ENCODE measurements at regions of chr3 and their contacts with region 1.

Region 1: DNA sequence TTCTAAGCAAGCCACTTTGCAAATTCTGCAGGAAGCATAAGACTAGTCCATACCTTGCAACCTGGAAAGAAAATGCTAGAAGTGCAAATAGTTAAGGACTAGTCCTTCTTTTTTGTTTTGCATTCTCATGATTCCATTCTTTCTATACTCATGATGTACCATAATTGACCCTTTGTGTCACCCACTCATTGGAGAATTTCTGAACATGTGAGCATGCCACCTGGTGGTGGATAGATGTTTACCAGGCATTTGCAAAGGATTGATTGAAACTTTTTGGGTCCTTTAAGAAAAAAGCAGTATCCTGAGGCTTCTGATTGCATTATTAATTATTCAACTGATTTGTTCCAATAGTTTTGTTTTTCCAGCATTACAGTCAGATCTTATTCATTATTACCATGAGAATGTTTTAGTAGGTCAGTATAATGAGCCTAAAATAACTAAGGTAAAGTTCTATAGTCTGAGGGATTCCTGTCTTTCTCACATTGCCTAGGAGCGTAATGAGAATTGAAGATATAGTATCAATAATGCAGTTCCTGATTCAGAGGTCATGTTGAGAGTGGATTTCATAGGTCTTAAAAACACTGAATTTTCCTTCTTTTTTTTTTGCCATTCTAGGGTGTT is 20.2 kb upstream of the DIPK2A start:
- DNase-seq: no peak
- ATAC-seq: no peak
- H3K4me3 ChIP-seq: no peak overlapping the region
- H3K27ac ChIP-seq: no peak overlapping the region
- H3K4me1 ChIP-seq: no peaks in the 10 kb centered on the region
- H3K27me3 ChIP-seq: no peaks in the 10 kb centered on the region

Region 2: GRCh38 chr3:143775459-143775858 is 176.0 kb before region 1 on chr3:
- intact Hi-C with region 1: loop called in 3 of 4 experiments (anchors 10 kb)
- DNase-seq: no peak
- ATAC-seq: peak; percentile 66 to 73
- H3K4me3 ChIP-seq: peak overlapping the region; percentile 16
- H3K27ac ChIP-seq: no peak overlapping the region
- H3K4me1 ChIP-seq: no peaks in the 10 kb centered on the region
- H3K27me3 ChIP-seq: no peaks in the 10 kb centered on the region

Region 3: GRCh38 chr3:144018776-144019175 is 67.3 kb after region 1 on chr3:
- intact Hi-C with region 1: no loop called
- DNase-seq: no peak
- ATAC-seq: no peak
- H3K4me3 ChIP-seq: no peak overlapping the region
- H3K27ac ChIP-seq: no peak overlapping the region
- H3K4me1 ChIP-seq: no peaks in the 10 kb centered on the region
- H3K27me3 ChIP-seq: no peaks in the 10 kb centered on the region

Region 4: DNA sequence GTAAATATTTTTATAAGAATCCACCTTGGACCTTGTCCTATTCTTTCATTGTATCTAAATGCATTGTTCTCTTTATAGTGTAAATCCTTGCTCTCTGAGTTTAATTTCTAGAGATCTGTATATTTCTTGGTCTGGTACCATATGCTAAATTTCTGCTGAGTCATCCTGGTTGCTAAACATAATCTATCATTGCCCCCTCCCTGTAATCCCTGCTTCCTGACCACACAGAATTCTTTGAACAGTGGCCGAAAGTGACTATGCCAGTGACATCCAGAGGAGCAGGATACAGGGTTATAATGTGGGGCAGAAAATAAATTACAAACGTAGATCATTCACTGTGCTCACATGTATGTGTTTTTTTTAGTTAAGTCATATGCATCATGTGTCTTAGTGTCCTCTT is 163.3 kb after region 1 on chr3:
- intact Hi-C with region 1: no loop called
- DNase-seq: no peak
- ATAC-seq: no peak
- H3K4me3 ChIP-seq: no peak overlapping the region
- H3K27ac ChIP-seq: no peak overlapping the region
- H3K4me1 ChIP-seq: peaks cover 2% of the 10 kb centered on the region
- H3K27me3 ChIP-seq: no peaks in the 10 kb centered on the region